ENCODE measurements at regions of chr10 and their contacts with region 1.

Region 1: GRCh38 chr10:23525406-23525805 is 86.5 kb downstream of the OTUD1 start:
- DNase-seq: no peak
- H3K4me3 ChIP-seq: no peak overlapping the region
- H3K27ac ChIP-seq: no peak overlapping the region
- H3K27me3 ChIP-seq: no peaks in the 10 kb centered on the region
- CTCF ChIP-seq: peak; percentile 41

Region 2: DNA sequence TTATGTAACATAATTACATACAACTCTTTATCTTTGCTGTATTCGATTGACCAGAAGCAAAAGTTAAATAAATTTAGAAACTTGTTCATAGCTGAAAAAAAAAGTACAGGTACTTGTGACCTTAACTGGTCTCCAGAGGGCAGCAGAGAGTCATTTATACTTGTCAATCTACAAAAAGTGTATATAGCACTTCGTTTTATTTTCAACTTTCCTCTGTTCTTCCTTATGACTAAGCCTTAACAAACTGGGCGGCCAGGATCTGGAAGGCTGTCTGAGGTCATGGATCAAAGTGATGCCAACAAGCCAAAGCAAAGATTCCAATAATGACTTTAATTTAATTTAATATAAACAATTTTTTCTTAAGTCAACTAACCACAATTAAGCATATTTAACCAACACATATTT is 210.6 kb before region 1 on chr10:
- in situ Hi-C with region 1: loop called (anchors 25 kb)
- DNase-seq: peak; percentile 75
- H3K4me3 ChIP-seq: no peak overlapping the region
- H3K27ac ChIP-seq: no peak overlapping the region
- H3K27me3 ChIP-seq: no peaks in the 10 kb centered on the region
- CTCF ChIP-seq: peak; percentile 58

Region 3: DNA sequence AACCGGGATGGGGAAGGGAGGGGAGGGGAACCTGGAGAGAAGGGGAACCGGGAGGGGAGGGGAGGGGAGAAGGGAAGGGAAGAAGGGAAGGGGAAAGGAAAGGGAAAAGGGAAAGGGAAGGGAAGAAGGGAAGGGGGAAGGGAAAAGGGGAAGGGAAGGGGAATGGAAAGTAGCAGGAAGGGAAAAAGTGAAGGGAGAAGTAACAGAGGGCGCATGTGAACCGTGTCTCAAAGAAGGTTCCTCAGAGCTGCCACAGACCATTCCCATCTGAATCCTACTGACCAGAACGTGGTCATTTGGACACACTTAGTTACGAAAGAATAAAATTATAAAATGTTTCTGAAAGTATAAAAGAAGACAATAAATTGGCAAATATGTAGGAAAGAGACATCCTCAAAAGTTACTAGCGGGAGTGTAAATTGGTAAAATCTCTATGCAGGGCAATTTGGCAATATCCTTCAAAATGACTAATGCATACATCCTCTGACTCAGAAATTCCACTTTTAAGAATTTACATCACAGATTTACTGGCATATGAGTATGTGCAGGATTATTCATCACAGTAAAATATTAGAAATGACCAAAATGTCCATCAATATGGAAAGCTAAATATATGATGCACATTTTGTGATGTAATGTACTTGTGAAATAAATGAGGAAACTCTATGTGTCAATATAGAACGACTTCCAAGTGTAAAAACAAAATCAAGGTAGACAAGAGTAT is 193.7 kb before region 1 on chr10:
- in situ Hi-C with region 1: no loop called
- DNase-seq: no peak
- H3K4me3 ChIP-seq: no peak overlapping the region
- H3K27ac ChIP-seq: no peak overlapping the region
- H3K27me3 ChIP-seq: no peaks in the 10 kb centered on the region
- CTCF ChIP-seq: no peak